PC-3 (cell line): ENCODE measurements at regions of chr6 and their contacts with region 1.

Region 1: GRCh38 chr6:16128759-16129622 is at the start of gene MYLIP:
- DNase-seq: peak; percentile 93
- ATAC-seq: peak; percentile 74
- H3K4me3 ChIP-seq: peak within 1 kb of the TSS; percentile 98
- H3K27ac ChIP-seq: peak within 1 kb of the TSS; percentile 84
- H3K4me1 ChIP-seq: peaks cover 36% of the 10 kb centered on the region
- H3K27me3 ChIP-seq: peaks cover 18% of the 10 kb centered on the region
- CTCF ChIP-seq: peak; percentile 61
- total RNA-seq, gene MYLIP: 12.5 and 14.1 TPM in 2 replicates

Region 2: GRCh38 chr6:15417811-15418210 is 711.2 kb before region 1 on chr6:
- CTCF ChIA-PET with region 1: no interaction called
- POLR2A ChIA-PET with region 1: interaction called, 13 read pairs
- intact Hi-C with region 1: no loop called
- DNase-seq: peak; percentile 96
- ATAC-seq: peak; percentile 96
- H3K4me3 ChIP-seq: no peak overlapping the region
- H3K27ac ChIP-seq: peak overlapping the region; percentile 40
- H3K4me1 ChIP-seq: peaks cover 17% of the 10 kb centered on the region
- H3K27me3 ChIP-seq: no peaks in the 10 kb centered on the region
- CTCF ChIP-seq: no peak

Region 3: DNA sequence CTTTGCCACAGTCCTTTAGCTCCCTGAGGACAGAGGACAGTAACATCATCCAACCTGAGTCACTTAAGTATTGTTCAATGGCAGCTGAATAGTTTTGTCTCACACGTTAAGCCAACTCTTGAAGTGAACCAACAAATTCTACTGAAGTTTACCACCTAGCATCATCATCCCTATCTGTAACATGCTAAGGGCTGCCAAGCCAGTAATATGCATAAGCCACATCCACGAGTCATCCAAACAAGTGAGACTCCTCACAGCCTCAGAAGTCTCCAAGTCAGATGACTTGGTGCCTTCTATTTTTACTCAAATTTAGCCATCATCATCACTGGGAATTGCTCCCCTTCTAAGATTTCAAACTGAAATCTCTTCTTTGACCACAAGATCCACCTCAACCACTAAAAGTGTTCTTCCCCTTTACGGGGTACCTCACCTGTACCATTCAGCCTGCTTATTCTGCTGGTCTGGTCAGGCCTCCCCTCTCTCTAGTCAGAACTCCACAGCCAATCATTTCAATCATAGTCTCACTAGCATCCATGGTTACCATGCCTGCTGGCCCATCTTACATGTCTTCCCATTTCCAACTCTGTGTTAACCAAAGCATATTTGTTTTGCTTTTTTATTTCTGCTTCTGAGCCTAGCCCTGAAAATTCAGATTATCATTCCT is 539.9 kb before region 1 on chr6:
- CTCF ChIA-PET with region 1: no interaction called
- POLR2A ChIA-PET with region 1: no interaction called
- intact Hi-C with region 1: no loop called
- DNase-seq: peak; percentile 53
- ATAC-seq: peak; percentile 72
- H3K4me3 ChIP-seq: no peak overlapping the region
- H3K27ac ChIP-seq: no peak overlapping the region
- H3K4me1 ChIP-seq: no peaks in the 10 kb centered on the region
- H3K27me3 ChIP-seq: no peaks in the 10 kb centered on the region
- CTCF ChIP-seq: no peak

Region 4: GRCh38 chr6:15893556-15894268 is 235.3 kb before region 1 on chr6:
- CTCF ChIA-PET with region 1: interaction called, 4 read pairs
- POLR2A ChIA-PET with region 1: no interaction called
- intact Hi-C with region 1: loop called (anchors 2 kb)
- DNase-seq: peak; percentile 86
- ATAC-seq: peak; percentile 62
- H3K4me3 ChIP-seq: no peak overlapping the region
- H3K27ac ChIP-seq: no peak overlapping the region
- H3K4me1 ChIP-seq: 0 out of 2 replicates have a peak, but pooled peaks cover 4% of the 10 kb centered on the region
- H3K27me3 ChIP-seq: no peaks in the 10 kb centered on the region
- CTCF ChIP-seq: peak; percentile 79

Region 5: DNA sequence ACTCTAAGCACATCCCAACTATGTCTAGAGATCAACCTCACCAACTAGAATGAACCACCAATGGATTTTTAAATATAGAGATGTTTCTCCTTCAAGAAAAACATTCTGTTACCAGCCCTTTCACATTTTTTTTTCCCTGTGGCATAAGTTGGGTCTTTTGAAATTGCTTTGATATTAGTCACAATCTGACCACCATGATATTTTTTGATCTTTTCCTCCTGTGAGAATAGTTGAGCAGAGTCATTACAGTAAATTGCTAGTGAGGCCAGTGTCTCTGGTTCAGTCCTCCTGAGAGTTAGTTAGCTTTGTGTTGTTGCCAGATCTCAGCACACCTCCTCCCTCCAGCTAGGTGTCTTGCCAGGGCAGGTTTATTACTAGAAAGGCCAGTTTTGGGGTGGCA is 79.8 kb before region 1 on chr6:
- CTCF ChIA-PET with region 1: no interaction called
- POLR2A ChIA-PET with region 1: interaction called, 20 read pairs
- intact Hi-C with region 1: no loop called
- DNase-seq: no peak
- ATAC-seq: no peak
- H3K4me3 ChIP-seq: no peak overlapping the region
- H3K27ac ChIP-seq: no peak overlapping the region
- H3K4me1 ChIP-seq: no peaks in the 10 kb centered on the region
- H3K27me3 ChIP-seq: peaks cover 32% of the 10 kb centered on the region; the same call in 1 of the 2 replicates
- CTCF ChIP-seq: no peak

Region 6: GRCh38 chr6:16168858-16169257 is 39.9 kb after region 1 on chr6:
- CTCF ChIA-PET with region 1: no interaction called
- POLR2A ChIA-PET with region 1: no interaction called
- intact Hi-C with region 1: loop called (anchors 1 kb)
- DNase-seq: peak; percentile 56
- ATAC-seq: peak; percentile 59; the same call in 1 of the 2 replicates
- H3K4me3 ChIP-seq: no peak overlapping the region
- H3K27ac ChIP-seq: no peak overlapping the region
- H3K4me1 ChIP-seq: no peaks in the 10 kb centered on the region
- H3K27me3 ChIP-seq: peaks cover 55% of the 10 kb centered on the region
- CTCF ChIP-seq: peak; percentile 62